CD4-positive, alpha-beta T cell (primary cell): ENCODE measurements at regions of chr17 and their contacts with region 1.

Region 1: GRCh38 chr17:32997753-32998632 is 6.3 kb downstream of the SPACA3 start:
- DNase-seq: peak; percentile 46 to 78 (median 67)
- ATAC-seq: no peak
- H3K4me3 ChIP-seq: no peak overlapping the region
- H3K4me3 Mint-ChIP-seq: no peak overlapping the region
- H3K27ac ChIP-seq: no peak overlapping the region
- H3K27ac Mint-ChIP-seq: no peak overlapping the region
- H3K4me1 ChIP-seq: peaks cover 7% of the 10 kb centered on the region
- H3K4me1 Mint-ChIP-seq: peaks cover 5% of the 10 kb centered on the region
- H3K27me3 ChIP-seq: no peaks in the 10 kb centered on the region
- H3K27me3 Mint-ChIP-seq: peaks cover 15% of the 10 kb centered on the region
- CTCF ChIP-seq: peak; percentile 94

Region 2: DNA sequence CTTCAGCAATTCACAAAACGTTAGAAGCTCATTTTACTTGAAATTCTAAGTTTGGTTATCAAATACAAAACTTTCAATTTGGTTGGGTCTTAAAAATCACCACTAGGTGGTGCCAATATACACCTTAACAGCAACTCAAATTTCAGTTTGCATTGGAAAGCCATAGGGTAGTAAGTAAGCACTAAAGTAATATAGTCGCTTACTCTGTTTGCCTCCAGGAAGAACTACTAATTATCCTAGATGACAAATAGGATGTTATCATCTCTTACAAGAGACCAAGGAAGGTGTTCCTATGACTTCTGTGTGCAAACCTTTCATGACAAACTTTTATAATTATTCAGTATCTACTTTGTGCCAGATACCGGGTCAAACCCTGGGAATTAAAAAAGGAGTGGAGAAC is 214.4 kb before region 1 on chr17:
- CTCF ChIA-PET with region 1: interaction called, 6 read pairs
- POLR2A ChIA-PET with region 1: no interaction called
- intact Hi-C with region 1: loop called (anchors 1 kb)
- DNase-seq: peak in 3 of 14 experiments; percentile 64 to 67 (median 67)
- ATAC-seq: peak; percentile 52
- H3K4me3 ChIP-seq: no peak overlapping the region
- H3K4me3 Mint-ChIP-seq: no peak overlapping the region
- H3K27ac ChIP-seq: no peak overlapping the region
- H3K27ac Mint-ChIP-seq: no peak overlapping the region
- H3K4me1 ChIP-seq: no peaks in the 10 kb centered on the region
- H3K4me1 Mint-ChIP-seq: no peaks in the 10 kb centered on the region
- H3K27me3 ChIP-seq: no peaks in the 10 kb centered on the region
- H3K27me3 Mint-ChIP-seq: no peaks in the 10 kb centered on the region
- CTCF ChIP-seq: peak; percentile 86

Region 3: GRCh38 chr17:32852811-32853210 is 145.2 kb before region 1 on chr17:
- CTCF ChIA-PET with region 1: no interaction called
- POLR2A ChIA-PET with region 1: no interaction called
- intact Hi-C with region 1: no loop called
- DNase-seq: no peak
- ATAC-seq: no peak
- H3K4me3 ChIP-seq: no peak overlapping the region
- H3K4me3 Mint-ChIP-seq: no peak overlapping the region
- H3K27ac ChIP-seq: no peak overlapping the region
- H3K27ac Mint-ChIP-seq: no peak overlapping the region
- H3K4me1 ChIP-seq: no peaks in the 10 kb centered on the region
- H3K4me1 Mint-ChIP-seq: no peaks in the 10 kb centered on the region
- H3K27me3 ChIP-seq: no peaks in the 10 kb centered on the region
- H3K27me3 Mint-ChIP-seq: peaks cover 17% of the 10 kb centered on the region
- CTCF ChIP-seq: no peak

Region 4: DNA sequence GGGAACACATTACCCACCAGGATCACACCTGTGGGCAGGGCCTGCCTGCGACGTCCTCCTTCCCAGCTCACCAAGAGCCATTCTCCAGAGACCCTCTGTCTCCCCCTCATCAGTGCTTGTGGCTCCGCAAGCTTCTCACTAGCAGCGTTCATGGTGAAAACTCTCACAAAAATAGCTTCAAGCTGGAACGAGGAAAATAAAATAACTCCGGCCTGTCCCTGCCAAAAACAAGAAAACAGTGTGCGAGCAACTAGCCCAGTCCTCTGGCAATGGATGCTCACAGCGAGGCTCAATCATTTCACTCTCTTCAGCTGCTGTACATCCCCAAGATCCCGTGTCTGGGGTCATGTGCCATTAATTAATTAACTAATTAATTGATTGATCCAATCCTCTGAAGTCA is 11.6 kb after region 1 on chr17:
- CTCF ChIA-PET with region 1: interaction called, 13 read pairs
- POLR2A ChIA-PET with region 1: no interaction called
- intact Hi-C with region 1: no loop called
- DNase-seq: no peak
- ATAC-seq: no peak
- H3K4me3 ChIP-seq: no peak overlapping the region
- H3K4me3 Mint-ChIP-seq: no peak overlapping the region
- H3K27ac ChIP-seq: no peak overlapping the region
- H3K27ac Mint-ChIP-seq: no peak overlapping the region
- H3K4me1 ChIP-seq: no peaks in the 10 kb centered on the region
- H3K4me1 Mint-ChIP-seq: no peaks in the 10 kb centered on the region
- H3K27me3 ChIP-seq: peaks cover under 1 to 7% of the 10 kb centered on the region in 2 experiments
- H3K27me3 Mint-ChIP-seq: peaks cover 20% of the 10 kb centered on the region
- CTCF ChIP-seq: no peak

Region 5: GRCh38 chr17:33164169-33164881 is 166.3 kb after region 1 on chr17:
- CTCF ChIA-PET with region 1: no interaction called
- POLR2A ChIA-PET with region 1: no interaction called
- intact Hi-C with region 1: no loop called
- DNase-seq: no peak
- ATAC-seq: no peak
- H3K4me3 ChIP-seq: no peak overlapping the region
- H3K4me3 Mint-ChIP-seq: no peak overlapping the region
- H3K27ac ChIP-seq: no peak overlapping the region
- H3K27ac Mint-ChIP-seq: no peak overlapping the region
- H3K4me1 ChIP-seq: no peaks in the 10 kb centered on the region
- H3K4me1 Mint-ChIP-seq: no peaks in the 10 kb centered on the region
- H3K27me3 ChIP-seq: peaks cover 0 to 4% of the 10 kb centered on the region in 2 experiments
- H3K27me3 Mint-ChIP-seq: peaks cover 37% of the 10 kb centered on the region
- CTCF ChIP-seq: no peak

Region 6: DNA sequence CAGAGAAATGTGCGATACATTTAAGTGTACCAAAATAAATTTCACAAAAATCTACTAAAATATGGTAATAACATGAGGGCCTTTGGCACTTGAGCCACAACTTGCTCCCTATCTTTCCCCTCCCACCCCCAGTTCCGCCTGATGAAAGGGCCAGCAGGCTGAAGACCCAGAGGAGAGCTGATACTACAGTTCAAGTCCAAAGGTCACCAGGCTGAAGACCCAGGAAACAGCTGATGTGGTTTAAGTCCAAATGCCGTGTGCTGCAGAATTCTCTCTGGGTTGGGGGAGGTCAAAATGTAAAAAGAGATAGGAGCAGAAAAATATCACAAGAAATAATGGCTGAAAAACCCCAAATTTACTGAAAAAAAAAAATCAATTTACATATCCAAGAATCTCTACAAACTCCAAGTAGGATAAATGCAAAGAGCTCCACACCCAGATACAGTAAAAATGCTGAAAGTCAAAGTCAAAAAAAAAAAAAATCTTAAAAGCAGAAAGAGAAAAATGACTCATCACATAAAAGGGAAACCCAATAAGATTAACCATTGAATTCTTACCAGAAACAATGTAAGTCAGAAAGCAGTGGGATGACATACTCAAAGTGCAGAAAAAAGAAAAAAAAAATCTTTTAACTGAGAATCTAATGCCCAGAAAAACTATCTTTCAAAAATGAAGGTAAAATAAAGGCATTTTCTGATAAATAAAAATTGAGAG is 747.2 kb after region 1 on chr17:
- CTCF ChIA-PET with region 1: no interaction called
- POLR2A ChIA-PET with region 1: no interaction called
- intact Hi-C with region 1: loop called (anchors 5 kb)
- DNase-seq: no peak
- ATAC-seq: no peak
- H3K4me3 ChIP-seq: no peak overlapping the region
- H3K4me3 Mint-ChIP-seq: no peak overlapping the region
- H3K27ac ChIP-seq: no peak overlapping the region
- H3K27ac Mint-ChIP-seq: no peak overlapping the region
- H3K4me1 ChIP-seq: no peaks in the 10 kb centered on the region
- H3K4me1 Mint-ChIP-seq: no peaks in the 10 kb centered on the region
- H3K27me3 ChIP-seq: peaks cover 6 to 21% of the 10 kb centered on the region in 2 experiments
- H3K27me3 Mint-ChIP-seq: peaks cover 43% of the 10 kb centered on the region
- CTCF ChIP-seq: no peak

Region 7: DNA sequence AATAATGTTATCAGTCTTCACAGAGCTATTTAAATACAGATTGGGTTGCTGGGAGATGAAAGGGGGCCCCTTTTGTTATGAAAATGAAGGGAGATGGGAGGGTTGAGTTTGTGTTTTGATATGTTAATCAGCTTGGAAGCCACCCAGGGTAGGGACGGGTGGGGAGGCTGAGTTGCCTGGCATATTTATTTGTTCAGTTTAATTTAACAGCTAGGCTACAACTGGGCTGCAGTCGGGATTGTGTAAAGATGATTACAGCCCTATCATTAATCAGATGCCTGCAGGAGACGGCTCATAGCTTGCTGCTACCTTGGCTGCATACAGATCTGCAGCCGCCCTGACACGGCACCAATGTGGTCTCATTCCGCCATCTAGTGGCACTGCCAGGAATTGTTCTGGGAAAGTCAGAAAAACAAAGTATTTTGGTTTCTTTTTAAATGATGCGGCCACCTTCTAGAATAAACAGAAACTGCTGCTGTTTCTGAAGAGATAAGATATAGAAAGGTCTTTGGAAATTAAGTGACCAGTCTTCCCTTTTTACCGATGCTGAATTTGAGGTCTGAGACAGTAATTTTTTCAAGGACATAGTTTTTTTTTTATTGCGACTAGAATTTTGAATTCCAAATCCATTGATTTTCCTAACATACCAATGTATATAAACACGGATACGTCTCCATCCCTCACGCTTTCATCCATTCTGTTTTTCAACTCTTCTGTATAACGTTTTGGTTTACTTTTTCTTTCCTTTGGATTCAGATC is 753.1 kb after region 1 on chr17:
- CTCF ChIA-PET with region 1: no interaction called
- POLR2A ChIA-PET with region 1: no interaction called
- intact Hi-C with region 1: loop called (anchors 5 kb)
- DNase-seq: peak; percentile 26 to 69 (median 50)
- ATAC-seq: peak; percentile 68
- H3K4me3 ChIP-seq: no peak overlapping the region
- H3K4me3 Mint-ChIP-seq: no peak overlapping the region
- H3K27ac ChIP-seq: no peak overlapping the region
- H3K27ac Mint-ChIP-seq: no peak overlapping the region
- H3K4me1 ChIP-seq: no peaks in the 10 kb centered on the region
- H3K4me1 Mint-ChIP-seq: peaks cover 10% of the 10 kb centered on the region
- H3K27me3 ChIP-seq: peaks cover 19 to 37% of the 10 kb centered on the region in 2 experiments
- H3K27me3 Mint-ChIP-seq: peaks cover 63% of the 10 kb centered on the region
- CTCF ChIP-seq: peak; percentile 96